Left cardiac atrium (tissue), 4 donors: ENCODE measurements at regions of chr9 and their contacts with region 1.

Region 1: GRCh38 chr9:17719053-17719452 is 140.2 kb downstream of the SH3GL2 start:
- DNase-seq: no peak
- ATAC-seq: no peak

Region 2: GRCh38 chr9:17653947-17654465 is 65.0 kb before region 1 on chr9:
- intact Hi-C with region 1: loop called in 1 of 2 experiments (anchors 10 kb)
- DNase-seq: no peak
- ATAC-seq: no peak